HCT116 (cell line): ENCODE measurements at regions of chr2 and their contacts with region 1.

Region 1: DNA sequence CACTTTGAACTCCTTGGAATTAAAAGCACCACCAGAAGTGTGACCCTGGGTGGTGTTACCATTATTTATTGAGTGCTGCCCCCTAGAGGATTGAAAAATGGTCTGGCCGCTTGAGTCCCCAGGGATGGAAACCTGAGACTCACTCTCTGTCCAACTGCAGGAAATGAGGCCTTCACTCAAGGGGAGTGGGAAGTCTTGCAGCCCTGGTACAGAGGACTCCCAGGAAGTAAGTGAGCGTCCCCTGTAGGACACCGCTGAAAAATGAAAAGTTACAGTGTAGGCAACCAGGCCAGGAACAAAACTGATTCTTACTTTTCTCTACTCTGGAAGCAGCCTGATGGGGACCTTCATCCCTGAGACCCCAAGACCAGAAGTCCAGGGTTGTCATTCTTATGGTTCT is 2.2 kb upstream of the NRP2 start:
- DNase-seq: peak; percentile 89
- ATAC-seq: peak; percentile 81
- H3K4me3 ChIP-seq: no peak overlapping the region
- H3K27ac ChIP-seq: no peak overlapping the region
- H3K4me1 ChIP-seq: peaks cover 2 to 32% of the 10 kb centered on the region in 2 experiments; a peak in 3 of 4 replicates
- H3K27me3 ChIP-seq: peaks cover 8% of the 10 kb centered on the region; the same call in 1 of the 2 replicates
- CTCF ChIP-seq: peak; percentile 73 to 89 (median 83)
- POLR2A ChIP-seq: no peak
- RAD21 ChIP-seq: peak; percentile 69

Region 2: GRCh38 chr2:204260162-204260877 is 1419.7 kb before region 1 on chr2:
- CTCF ChIA-PET with region 1: interaction called, 16 read pairs
- POLR2A ChIA-PET with region 1: no interaction called
- RAD21 ChIA-PET with region 1: no interaction called
- intact Hi-C with region 1: loop called (anchors 1 kb)
- DNase-seq: peak; percentile 65
- ATAC-seq: peak; percentile 91
- H3K4me3 ChIP-seq: no peak overlapping the region
- H3K27ac ChIP-seq: no peak overlapping the region
- H3K4me1 ChIP-seq: peaks cover 3 to 9% of the 10 kb centered on the region in 2 experiments; a peak in 3 of 4 replicates
- H3K27me3 ChIP-seq: no peaks in the 10 kb centered on the region
- CTCF ChIP-seq: peak; percentile 69 to 84 (median 81)
- POLR2A ChIP-seq: no peak
- RAD21 ChIP-seq: peak; percentile 70

Region 3: DNA sequence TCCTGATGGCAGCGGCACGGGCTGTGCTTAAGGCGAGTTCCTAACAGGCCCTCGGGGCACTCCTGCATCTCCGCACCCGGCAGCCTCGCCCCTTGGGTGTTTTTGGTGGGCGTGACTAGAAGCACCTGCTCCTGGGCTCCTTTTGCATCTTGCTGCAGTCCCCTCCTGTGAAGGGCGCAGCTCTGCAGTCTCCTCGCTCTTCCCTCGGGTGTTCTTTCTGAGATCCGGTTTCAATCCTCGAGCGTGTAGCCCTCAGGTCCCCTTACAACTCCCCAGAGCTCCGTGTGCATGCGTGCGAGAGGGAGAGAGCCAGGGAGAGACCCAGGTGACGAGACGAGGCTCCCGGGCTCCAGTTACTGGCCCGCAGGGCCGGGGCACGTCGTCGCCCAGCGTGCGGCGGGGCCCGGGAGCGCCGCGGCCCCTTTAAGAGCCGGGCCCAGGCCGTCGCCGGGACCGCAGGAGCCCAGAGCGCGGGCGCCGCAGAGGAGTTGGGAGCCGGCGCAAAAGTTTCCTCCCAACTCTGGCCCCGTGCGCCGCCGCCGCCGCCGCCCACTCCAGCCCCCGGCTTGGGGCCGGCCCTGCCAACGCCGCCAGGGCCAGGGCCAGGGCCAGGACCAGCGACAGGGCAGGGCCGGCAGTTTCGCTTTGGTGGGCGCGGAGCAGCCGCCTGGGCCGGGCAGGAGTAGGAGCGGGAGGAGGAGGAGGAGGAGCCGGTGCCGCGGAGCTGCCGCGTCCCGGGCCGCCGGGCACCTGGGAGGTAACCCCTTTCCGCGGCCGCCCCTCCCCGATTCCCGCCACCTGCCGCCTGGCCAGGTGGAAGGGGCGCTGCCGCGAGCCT is 1134.8 kb before region 1 on chr2 and contains the start of gene PARD3B:
- CTCF ChIA-PET with region 1: no interaction called
- POLR2A ChIA-PET with region 1: no interaction called
- RAD21 ChIA-PET with region 1: no interaction called
- intact Hi-C with region 1: loop called (anchors 10 kb)
- DNase-seq: peak; percentile 18
- ATAC-seq: peak; percentile 85
- H3K4me3 ChIP-seq: peak within 1 kb of the TSS; percentile 36 to 57
- H3K27ac ChIP-seq: peak within 1 kb of the TSS; percentile 32; the same call in 1 of the 2 replicates
- H3K4me1 ChIP-seq: peaks cover 8 to 15% of the 10 kb centered on the region in 2 experiments; a peak in 3 of 4 replicates
- H3K27me3 ChIP-seq: no peaks in the 10 kb centered on the region; the same call in 1 of the 2 replicates
- CTCF ChIP-seq: no peak
- POLR2A ChIP-seq: no peak
- RAD21 ChIP-seq: no peak
- total RNA-seq, gene PARD3B: 2.0 TPM

Region 4: DNA sequence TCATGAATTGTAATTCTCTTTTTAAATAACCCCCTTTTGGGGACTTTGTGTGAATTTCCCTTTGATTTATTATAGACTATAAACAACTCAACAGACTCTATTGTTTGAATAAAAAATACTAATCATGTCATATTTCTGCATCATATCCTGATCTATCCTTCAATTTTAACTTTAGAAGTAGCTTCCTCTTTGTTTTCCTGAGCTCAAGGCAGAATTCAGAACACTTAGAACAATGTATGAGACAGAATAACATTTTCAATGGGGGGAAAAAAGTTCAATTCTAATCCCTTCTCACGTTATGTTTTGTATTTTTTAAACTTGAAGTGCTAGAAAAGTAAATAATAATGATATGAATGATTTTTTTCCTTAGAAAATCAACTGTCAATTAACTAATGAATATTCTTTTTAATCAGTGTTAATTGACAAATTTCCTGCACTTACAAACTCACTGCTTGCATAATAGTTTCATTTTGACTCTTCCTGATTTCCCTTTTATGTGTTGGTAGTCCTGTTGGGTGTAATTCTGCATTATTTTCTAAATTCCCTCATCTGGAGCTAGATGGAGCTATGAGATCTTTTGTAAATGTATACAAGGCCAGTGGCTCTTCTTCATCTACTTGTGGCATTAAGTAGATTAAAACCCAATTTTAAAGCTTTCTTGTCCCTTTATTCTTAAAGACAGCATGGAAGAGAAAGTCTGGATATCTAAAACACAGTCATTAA is 808.7 kb before region 1 on chr2:
- CTCF ChIA-PET with region 1: no interaction called
- POLR2A ChIA-PET with region 1: no interaction called
- RAD21 ChIA-PET with region 1: no interaction called
- intact Hi-C with region 1: loop called (anchors 10 kb)
- DNase-seq: no peak
- ATAC-seq: no peak
- H3K4me3 ChIP-seq: no peak overlapping the region
- H3K27ac ChIP-seq: no peak overlapping the region
- H3K4me1 ChIP-seq: no peaks in the 10 kb centered on the region
- H3K27me3 ChIP-seq: no peaks in the 10 kb centered on the region
- CTCF ChIP-seq: 0 out of 6 replicates have a peak, but pooled peaks of 1 of the 3 experiments have one; percentile 5
- POLR2A ChIP-seq: no peak
- RAD21 ChIP-seq: 0 out of 2 replicates have a peak, but pooled peaks have one; percentile 13

Region 5: GRCh38 chr2:205885492-205886099 is 205.5 kb after region 1 on chr2:
- CTCF ChIA-PET with region 1: no interaction called
- POLR2A ChIA-PET with region 1: no interaction called
- RAD21 ChIA-PET with region 1: no interaction called
- intact Hi-C with region 1: loop called (anchors 2 kb)
- DNase-seq: peak; percentile 68
- ATAC-seq: peak; percentile 99
- H3K4me3 ChIP-seq: no peak overlapping the region
- H3K27ac ChIP-seq: no peak overlapping the region
- H3K4me1 ChIP-seq: peaks cover 0 to 3% of the 10 kb centered on the region in 2 experiments; a peak in 2 of 4 replicates
- H3K27me3 ChIP-seq: no peaks in the 10 kb centered on the region
- CTCF ChIP-seq: peak; percentile 92 to 97 (median 94)
- POLR2A ChIP-seq: no peak
- RAD21 ChIP-seq: peak; percentile 94